Colonic mucosa (tissue), 4 donors: ENCODE measurements at regions of chr7 and their contacts with region 1.

Region 1: DNA sequence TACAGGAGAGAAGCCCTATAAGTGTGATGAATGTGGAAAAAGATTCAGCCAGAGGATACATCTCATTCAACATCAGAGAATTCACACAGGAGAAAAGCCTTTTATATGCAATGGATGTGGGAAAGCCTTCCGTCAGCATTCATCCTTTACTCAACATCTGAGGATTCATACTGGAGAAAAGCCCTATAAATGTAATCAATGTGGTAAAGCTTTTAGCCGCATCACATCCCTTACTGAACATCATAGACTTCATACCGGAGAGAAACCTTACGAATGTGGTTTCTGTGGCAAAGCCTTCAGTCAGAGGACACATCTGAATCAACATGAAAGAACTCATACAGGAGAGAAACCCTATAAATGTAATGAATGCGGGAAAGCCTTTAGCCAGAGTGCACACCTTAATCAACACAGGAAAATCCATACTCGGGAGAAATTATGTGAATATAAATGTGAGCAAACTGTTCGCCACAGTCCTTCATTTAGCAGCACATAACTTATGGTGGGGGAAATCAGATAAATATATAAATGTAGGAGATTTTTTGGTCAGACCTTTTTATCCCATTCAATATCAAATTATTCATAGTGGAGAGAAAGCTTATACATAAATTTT is 12.1 kb upstream of the MRPS17 start:
- DNase-seq: no peak
- H3K4me3 ChIP-seq: no peak overlapping the region
- H3K27ac ChIP-seq: no peak overlapping the region
- H3K4me1 ChIP-seq: no peaks in the 10 kb centered on the region
- H3K27me3 ChIP-seq: no peaks in the 10 kb centered on the region
- CTCF ChIP-seq: no peak

Region 2: GRCh38 chr7:55898287-55898686 is 41.3 kb before region 1 on chr7:
- intact Hi-C with region 1: loop called (anchors 10 kb)
- DNase-seq: no peak
- H3K4me3 ChIP-seq: no peak overlapping the region
- H3K27ac ChIP-seq: no peak overlapping the region
- H3K4me1 ChIP-seq: no peaks in the 10 kb centered on the region
- H3K27me3 ChIP-seq: no peaks in the 10 kb centered on the region
- CTCF ChIP-seq: no peak

Region 3: DNA sequence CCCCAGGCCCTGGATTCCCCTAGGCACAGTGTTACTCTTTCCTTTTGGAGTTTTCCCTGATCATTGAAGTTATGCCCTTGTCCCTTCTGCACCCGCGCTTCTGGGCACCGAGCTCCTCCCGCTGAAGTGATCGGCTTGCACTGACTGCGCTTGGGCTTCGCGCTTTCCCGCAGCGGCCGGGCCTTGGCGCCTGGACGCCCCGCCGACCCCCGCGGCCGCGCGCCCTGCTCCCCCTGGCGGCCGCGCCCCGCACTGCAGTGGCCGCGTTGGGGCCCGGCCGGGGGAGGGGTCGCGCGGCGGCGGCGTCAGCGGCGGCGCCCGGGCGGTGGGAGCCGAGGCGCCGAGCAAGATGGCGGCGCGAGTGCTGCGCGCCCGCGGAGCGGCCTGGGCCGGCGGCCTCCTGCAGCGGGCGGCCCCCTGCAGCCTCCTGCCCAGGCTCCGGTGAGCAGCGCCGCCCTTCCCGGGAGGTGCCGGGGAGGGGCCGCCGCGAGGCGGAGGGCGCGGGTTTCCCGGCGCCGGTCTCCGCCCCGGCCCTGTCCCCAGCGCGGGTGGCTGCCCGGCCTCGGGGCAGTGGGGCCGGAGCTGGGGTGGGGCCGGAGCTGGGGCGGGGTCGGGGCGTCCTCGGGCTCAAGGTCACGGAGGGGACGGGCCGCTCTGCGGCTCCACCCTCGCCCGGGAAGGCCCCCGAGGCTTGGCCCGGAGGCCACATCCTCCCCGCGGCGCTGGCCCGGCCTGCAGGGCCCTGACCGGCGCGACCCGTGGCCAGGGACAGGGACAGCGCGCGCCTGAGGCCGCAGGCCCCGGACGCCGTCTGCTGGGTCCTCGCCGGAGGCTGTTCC is 24.9 kb after region 1 on chr7 and contains the start of gene NIPSNAP2:
- intact Hi-C with region 1: no loop called
- DNase-seq: peak; percentile 86
- H3K4me3 ChIP-seq: peak within 1 kb of the TSS; percentile 66
- H3K27ac ChIP-seq: peak within 1 kb of the TSS; percentile 94
- H3K4me1 ChIP-seq: peaks cover 5% of the 10 kb centered on the region
- H3K27me3 ChIP-seq: no peaks in the 10 kb centered on the region
- CTCF ChIP-seq: no peak
- total RNA-seq, gene NIPSNAP2: 32.2 to 67.5 TPM